ENCODE measurements at regions of chr6 and their contacts with region 1.

Region 1: DNA sequence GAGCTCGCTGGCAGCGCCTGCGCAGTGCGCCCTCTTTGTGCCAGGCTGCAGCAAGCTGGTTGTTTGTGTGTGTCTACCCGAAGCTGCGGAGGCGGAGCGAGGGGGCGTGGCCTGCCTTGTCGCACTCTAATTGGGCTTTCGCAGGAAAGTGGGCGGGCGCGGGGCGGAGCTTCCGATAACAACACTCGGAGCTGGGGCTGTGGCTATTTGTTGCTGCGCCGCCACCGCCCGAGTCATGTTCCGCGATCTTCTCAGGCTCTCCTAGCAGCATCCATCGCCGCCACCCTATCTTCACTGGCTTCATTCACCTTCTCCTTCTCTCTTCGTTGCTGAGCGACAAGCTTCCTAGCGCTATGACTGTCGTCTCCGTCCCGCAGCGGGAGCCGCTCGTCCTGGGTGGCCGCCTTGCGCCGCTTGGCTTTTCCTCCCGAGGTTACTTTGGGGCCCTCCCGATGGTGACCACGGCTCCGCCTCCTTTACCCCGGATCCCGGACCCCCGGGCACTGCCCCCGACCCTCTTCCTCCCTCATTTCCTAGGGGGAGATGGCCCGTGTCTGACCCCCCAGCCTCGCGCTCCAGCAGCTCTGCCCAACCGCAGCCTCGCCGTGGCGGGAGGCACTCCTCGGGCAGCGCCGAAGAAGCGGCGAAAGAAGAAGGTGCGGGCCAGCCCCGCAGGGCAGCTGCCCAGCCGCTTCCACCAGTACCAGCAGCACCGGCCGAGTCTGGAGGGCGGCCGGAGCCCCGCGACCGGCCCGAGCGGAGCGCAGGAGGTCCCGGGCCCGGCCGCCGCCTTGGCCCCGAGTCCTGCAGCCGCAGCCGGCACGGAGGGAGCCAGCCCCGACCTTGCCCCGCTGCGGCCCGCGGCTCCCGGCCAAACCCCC is at the start of gene PNRC1:
- DNase-seq: peak; percentile 100
- ATAC-seq: peak; percentile 75
- H3K4me3 Mint-ChIP-seq: peak within 1 kb of the TSS; percentile 96
- H3K27ac Mint-ChIP-seq: peak within 1 kb of the TSS; percentile 99
- H3K4me1 Mint-ChIP-seq: peaks cover 27% of the 10 kb centered on the region
- H3K27me3 Mint-ChIP-seq: no peaks in the 10 kb centered on the region
- CTCF ChIP-seq: no peak
- total RNA-seq, gene PNRC1: 157 to 162 TPM

Region 2: GRCh38 chr6:88855541-88856147 is 225.1 kb before region 1 on chr6:
- CTCF ChIA-PET with region 1: no interaction called
- POLR2A ChIA-PET with region 1: no interaction called
- intact Hi-C with region 1: no loop called
- DNase-seq: no peak
- ATAC-seq: no peak
- H3K4me3 Mint-ChIP-seq: no peak overlapping the region
- H3K27ac Mint-ChIP-seq: no peak overlapping the region
- H3K4me1 Mint-ChIP-seq: no peaks in the 10 kb centered on the region
- H3K27me3 Mint-ChIP-seq: no peaks in the 10 kb centered on the region
- CTCF ChIP-seq: no peak

Region 3: DNA sequence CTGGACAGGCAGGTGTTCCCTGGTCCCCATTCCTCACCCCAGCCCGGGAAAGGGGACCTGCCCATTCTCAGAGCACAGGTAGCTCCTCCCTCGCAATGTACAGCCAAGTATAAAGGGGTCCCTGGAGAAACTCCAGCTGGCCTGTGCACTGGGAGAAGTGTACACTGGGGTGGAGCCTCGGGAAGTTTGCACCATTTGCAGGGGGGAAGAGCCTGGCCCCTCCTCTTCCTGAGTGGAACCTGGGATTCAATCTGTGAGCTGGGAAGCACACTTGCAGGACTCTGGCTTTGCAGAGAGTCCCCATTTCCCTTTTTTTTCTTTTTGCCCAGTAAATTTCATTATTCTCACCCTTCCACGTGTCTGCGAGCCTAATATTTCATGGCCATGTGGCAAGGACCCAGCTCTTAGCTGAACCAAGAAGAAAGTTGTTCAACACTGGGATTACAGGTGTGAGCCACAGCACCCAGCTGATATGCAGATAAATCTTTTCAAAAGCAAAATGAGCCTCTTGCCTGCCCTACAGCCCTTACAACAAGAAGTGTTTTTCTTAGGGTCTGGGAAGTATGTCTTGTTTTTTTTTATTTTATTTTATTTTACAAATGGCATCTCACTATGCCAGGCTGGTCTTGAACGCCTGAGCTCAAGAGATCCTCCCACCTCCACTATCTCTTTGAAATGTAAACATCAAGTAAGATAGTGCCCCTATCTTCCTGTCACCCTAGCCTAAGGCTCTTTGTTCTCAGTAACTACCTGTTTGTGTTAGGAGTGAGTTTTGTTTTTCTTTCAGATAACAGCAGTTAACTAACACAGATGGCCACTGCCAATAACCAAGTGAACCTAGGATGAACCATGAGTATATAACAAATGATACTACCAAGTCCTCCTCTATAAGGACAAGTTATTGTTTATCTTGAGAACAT is 108.0 kb before region 1 on chr6:
- CTCF ChIA-PET with region 1: no interaction called
- POLR2A ChIA-PET with region 1: no interaction called
- intact Hi-C with region 1: no loop called
- DNase-seq: no peak
- ATAC-seq: no peak
- H3K4me3 Mint-ChIP-seq: no peak overlapping the region
- H3K27ac Mint-ChIP-seq: no peak overlapping the region
- H3K4me1 Mint-ChIP-seq: no peaks in the 10 kb centered on the region
- H3K27me3 Mint-ChIP-seq: no peaks in the 10 kb centered on the region
- CTCF ChIP-seq: no peak

Region 4: GRCh38 chr6:89054200-89054599 is 26.6 kb before region 1 on chr6:
- CTCF ChIA-PET with region 1: no interaction called
- POLR2A ChIA-PET with region 1: interaction called, 10 read pairs
- intact Hi-C with region 1: no loop called
- DNase-seq: no peak
- ATAC-seq: no peak
- H3K4me3 Mint-ChIP-seq: no peak overlapping the region
- H3K27ac Mint-ChIP-seq: no peak overlapping the region
- H3K4me1 Mint-ChIP-seq: peaks cover 19% of the 10 kb centered on the region
- H3K27me3 Mint-ChIP-seq: no peaks in the 10 kb centered on the region
- CTCF ChIP-seq: no peak

Region 5: DNA sequence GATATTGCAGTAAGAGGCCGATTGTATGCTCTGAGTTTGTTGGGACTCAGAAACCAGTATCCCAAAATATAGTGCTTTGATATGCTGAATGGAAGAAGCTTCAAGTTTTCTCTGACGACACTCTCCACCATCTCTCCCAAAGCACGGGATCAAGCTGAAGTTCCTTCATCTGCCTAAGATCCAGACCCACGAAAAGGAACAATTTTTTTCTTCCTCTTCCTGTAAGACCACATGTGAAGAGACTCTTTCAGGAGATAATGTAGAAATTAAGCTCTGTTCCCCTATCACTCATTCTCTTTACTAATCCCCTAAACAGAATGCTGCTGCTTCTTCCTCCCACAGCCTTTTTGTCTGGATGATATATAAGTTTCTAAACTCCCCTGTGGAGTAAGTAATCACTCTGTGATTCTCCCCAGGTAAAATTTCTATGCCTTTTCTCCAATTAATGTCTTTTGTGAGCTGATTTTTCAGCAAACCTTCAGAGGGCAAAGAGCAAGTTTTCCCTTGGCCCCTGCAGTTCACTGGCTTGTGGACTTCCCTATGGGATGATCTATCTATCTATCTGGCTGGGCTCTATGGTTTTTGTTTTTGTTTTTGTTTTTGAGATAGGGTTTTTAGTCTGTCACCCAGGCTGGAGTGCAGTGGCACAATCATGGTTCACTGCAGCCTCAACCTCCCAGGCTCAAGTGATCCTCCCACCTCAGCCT is 13.7 kb before region 1 on chr6:
- CTCF ChIA-PET with region 1: interaction called, 11 read pairs
- POLR2A ChIA-PET with region 1: interaction called, 10 read pairs
- intact Hi-C with region 1: no loop called
- DNase-seq: no peak
- ATAC-seq: no peak
- H3K4me3 Mint-ChIP-seq: no peak overlapping the region
- H3K27ac Mint-ChIP-seq: no peak overlapping the region
- H3K4me1 Mint-ChIP-seq: no peaks in the 10 kb centered on the region
- H3K27me3 Mint-ChIP-seq: peaks cover 2% of the 10 kb centered on the region
- CTCF ChIP-seq: no peak

Region 6: DNA sequence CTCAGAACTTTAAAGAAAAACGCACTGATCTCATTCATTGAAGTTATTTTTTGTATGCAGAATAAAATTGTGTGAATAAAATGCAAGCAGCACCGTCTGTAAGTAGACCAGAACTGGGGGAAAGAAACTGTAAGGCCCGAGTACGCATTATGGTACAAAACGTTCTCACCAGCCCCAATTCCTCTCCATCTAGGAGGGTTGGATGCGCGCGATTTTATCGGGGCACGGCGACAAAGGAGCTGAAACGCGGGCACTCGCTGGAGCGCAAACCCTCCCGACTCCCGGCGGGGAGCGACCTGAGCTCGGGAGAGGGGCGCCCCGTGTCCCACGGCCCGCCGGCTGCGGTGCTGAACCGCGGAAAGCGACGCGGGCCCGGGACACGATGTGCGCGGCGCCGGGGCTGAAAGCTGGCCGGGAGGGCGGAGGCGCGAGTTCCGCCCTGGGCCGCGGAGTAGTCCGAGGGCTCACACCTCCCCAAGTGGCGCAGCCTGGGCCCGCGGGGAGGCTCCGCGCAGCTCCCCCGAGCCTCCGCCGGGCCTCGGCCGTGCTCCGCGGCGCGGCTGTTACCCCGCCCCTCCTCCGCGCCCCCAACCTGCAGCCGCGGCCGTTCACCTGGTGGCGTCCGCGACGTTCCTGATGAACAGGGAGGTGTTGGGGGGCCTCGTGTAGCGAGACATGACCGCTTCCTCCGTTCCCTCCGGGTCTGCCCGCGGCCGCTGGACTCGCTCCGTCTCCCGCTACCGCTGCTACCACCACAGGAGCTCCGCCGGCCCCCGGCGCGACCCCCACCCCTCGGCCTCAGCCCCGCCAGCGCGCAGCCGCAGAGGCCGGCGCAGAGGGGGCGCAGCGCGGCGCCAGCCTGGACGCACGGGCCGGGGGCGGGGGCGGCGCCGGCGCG is 36.7 kb after region 1 on chr6 and contains the start of gene SRSF12:
- CTCF ChIA-PET with region 1: no interaction called
- POLR2A ChIA-PET with region 1: interaction called, 21 read pairs
- intact Hi-C with region 1: no loop called
- DNase-seq: peak; percentile 43
- ATAC-seq: peak; percentile 88
- H3K4me3 Mint-ChIP-seq: peak within 1 kb of the TSS; percentile 86
- H3K27ac Mint-ChIP-seq: peak within 1 kb of the TSS; percentile 38
- H3K4me1 Mint-ChIP-seq: peaks cover 5% of the 10 kb centered on the region
- H3K27me3 Mint-ChIP-seq: peaks cover 9% of the 10 kb centered on the region
- CTCF ChIP-seq: no peak
- total RNA-seq, gene SRSF12: 0.83 to 1.1 TPM

Region 7: DNA sequence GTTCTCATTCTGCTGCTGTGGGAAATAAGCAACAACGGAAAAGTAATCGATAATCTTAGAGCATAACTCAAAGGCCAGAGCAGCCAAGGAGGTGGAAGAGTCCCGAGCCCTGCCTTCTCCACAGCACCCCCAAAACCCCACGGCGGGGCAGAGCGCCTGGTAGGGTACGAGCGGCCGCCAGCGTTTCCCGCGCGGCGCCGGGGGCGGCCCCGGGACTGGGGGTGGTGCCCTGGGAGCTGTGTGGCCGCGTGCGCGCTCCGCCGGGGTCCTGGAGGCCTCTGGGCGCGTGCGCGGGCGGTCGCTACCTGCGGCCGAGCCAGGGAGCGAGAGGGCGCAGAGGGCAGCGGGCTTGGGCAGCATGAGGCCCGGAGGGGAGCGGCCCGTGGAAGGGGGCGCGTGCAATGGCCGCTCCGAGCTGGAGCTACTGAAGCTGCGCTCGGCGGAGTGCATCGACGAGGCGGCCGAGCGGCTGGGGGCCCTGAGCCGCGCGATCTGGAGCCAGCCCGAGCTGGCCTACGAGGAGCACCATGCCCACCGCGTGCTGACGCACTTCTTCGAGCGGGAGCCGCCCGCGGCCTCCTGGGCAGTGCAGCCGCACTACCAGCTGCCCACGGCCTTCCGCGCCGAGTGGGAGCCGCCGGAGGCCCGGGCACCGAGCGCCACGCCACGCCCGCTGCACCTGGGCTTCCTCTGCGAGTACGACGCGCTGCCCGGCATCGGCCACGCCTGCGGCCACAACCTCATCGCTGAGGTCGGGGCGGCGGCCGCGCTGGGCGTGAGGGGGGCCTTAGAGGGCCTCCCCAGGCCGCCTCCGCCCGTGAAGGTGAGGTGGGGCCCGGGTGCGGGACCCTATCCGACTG is 65.2 kb after region 1 on chr6 and contains the start of gene PM20D2:
- CTCF ChIA-PET with region 1: interaction called, 19 read pairs
- POLR2A ChIA-PET with region 1: interaction called, 108 read pairs
- intact Hi-C with region 1: loop called (anchors 2 kb)
- DNase-seq: peak; percentile 79
- ATAC-seq: peak; percentile 82
- H3K4me3 Mint-ChIP-seq: peak within 1 kb of the TSS; percentile 88
- H3K27ac Mint-ChIP-seq: peak within 1 kb of the TSS; percentile 98
- H3K4me1 Mint-ChIP-seq: peaks cover 33% of the 10 kb centered on the region
- H3K27me3 Mint-ChIP-seq: peaks cover 2% of the 10 kb centered on the region
- CTCF ChIP-seq: no peak
- total RNA-seq, gene PM20D2: 25.4 to 26.0 TPM

Region 8: GRCh38 chr6:89217299-89217910 is 136.6 kb after region 1 on chr6 and contains the start of gene GABRR1:
- CTCF ChIA-PET with region 1: no interaction called
- POLR2A ChIA-PET with region 1: no interaction called
- intact Hi-C with region 1: no loop called
- DNase-seq: no peak
- ATAC-seq: no peak
- H3K4me3 Mint-ChIP-seq: no peak within 1 kb of the TSS
- H3K27ac Mint-ChIP-seq: no peak within 1 kb of the TSS
- H3K4me1 Mint-ChIP-seq: no peaks in the 10 kb centered on the region
- H3K27me3 Mint-ChIP-seq: no peaks in the 10 kb centered on the region
- CTCF ChIP-seq: no peak
- total RNA-seq, gene GABRR1: not detected

Region 9: GRCh38 chr6:89352278-89353117 is 271.7 kb after region 1 on chr6 and contains the start of gene UBE2J1:
- CTCF ChIA-PET with region 1: no interaction called
- POLR2A ChIA-PET with region 1: interaction called, 21 read pairs
- intact Hi-C with region 1: loop called (anchors 10 kb)
- DNase-seq: peak; percentile 82
- ATAC-seq: peak; percentile 83
- H3K4me3 Mint-ChIP-seq: peak within 1 kb of the TSS; percentile 98
- H3K27ac Mint-ChIP-seq: peak within 1 kb of the TSS; percentile 93
- H3K4me1 Mint-ChIP-seq: peaks cover 71% of the 10 kb centered on the region
- H3K27me3 Mint-ChIP-seq: no peaks in the 10 kb centered on the region
- CTCF ChIP-seq: no peak
- total RNA-seq, gene UBE2J1: 23.2 to 24.6 TPM

Measured in activated CD8-positive, alpha-beta T cell treated with anti-CD3 and anti-CD28 coated beads for 36 hours (primary cell).